ENCODE measurements at regions of chr15 and their contacts with region 1.

Region 1: GRCh38 chr15:29364429-29365078 is 94.9 kb upstream of the NSMCE3 start:
- DNase-seq: peak; percentile 84
- H3K4me3 ChIP-seq: no peak overlapping the region
- CTCF ChIP-seq: peak; percentile 46

Region 2: DNA sequence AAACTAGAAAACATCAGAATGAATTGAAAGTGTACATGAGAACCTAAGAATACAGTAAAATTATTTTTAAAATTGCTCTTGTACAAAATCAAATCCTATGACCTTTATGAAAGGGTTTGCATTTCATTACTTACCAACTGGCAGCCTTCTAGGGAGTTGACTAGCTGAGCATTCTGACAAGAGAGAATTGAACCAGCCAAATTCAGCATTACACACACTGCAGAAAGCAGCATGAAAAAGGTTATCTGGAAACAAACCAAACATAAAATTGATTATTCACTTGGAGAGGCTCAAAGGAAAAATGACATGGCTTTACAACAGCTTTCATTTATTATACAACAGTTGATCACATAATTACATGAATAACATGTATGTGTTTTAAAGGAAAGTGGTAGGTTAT is 112.3 kb before region 1 on chr15:
- in situ Hi-C with region 1: no loop called
- DNase-seq: no peak
- H3K4me3 ChIP-seq: no peak overlapping the region
- CTCF ChIP-seq: no peak

Region 3: GRCh38 chr15:29324746-29325145 is 39.8 kb before region 1 on chr15:
- in situ Hi-C with region 1: no loop called
- DNase-seq: peak; percentile 60
- H3K4me3 ChIP-seq: no peak overlapping the region
- CTCF ChIP-seq: no peak

Region 4: DNA sequence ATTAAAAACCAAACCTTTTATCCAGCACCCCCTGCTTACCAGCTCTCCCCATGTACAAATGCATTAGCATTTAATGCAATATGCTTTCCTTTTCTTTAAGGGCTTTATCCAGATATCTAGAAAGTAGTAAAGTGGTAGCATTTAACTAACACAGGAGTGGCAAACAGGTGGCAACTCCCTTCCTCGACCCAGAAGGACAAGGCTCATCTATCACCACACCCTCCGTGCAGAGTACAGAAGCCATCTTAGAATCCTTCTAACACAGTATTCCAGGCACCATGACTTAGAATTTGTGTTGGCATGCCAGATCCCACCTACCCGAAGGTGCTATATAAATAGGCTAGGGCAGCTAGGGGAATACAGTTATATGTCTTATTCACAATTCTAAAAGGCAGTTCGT is 53.6 kb after region 1 on chr15:
- in situ Hi-C with region 1: loop called (anchors 5 kb)
- DNase-seq: no peak
- H3K4me3 ChIP-seq: no peak overlapping the region
- CTCF ChIP-seq: no peak